Activated T-helper 2 cell treated with anti-CD3 and anti-CD28 coated beads, Interferon-gamma antibody, Interleukin-2, Interleukin-4, amounts not matched to agents 10 μg/mL and 5 μg/mL and 100 μg/mL, durations not matched to agents 14 hours and 24 hours and 36 hours (primary cell): ENCODE measurements at regions of chr11 and their contacts with region 1.

Region 1: DNA sequence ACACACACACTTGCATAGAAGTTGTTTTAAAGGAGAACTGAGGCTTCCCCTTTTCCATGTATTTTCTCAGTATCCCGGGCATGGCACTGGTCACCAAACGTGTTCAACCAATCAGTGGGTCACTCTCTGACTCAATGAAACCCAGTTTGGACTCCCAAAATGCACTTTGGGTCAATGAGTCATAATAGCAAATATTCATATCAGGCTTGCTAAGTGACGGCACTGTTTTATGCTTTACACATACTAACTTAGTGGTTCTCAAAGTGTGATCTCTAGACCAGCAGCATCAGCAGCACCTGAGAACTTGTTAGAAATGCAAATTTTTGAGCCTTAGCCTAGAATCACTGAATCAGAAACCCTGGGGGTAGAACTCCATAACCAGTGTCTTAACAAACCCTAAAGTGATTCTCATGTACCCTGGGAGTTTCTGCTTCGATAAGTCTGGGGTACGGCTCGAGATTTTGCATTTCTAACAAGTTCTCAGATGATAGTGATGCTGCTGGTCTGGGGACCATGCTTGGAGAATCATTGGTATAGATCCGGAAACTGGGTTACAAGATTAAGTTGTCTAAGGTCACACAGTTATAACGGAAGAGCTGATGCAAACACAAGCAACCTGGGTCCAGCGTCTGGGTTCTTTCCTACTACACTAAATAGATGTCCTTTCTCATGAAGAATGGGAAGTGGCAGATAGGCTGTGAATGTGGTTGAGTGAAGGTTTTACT is 35.6 kb downstream of the ETS1 start:
- DNase-seq: no peak
- H3K4me3 Mint-ChIP-seq: no peak overlapping the region
- H3K27ac Mint-ChIP-seq: peak overlapping the region; percentile 73
- H3K4me1 Mint-ChIP-seq: peaks cover 42% of the 10 kb centered on the region
- H3K27me3 Mint-ChIP-seq: no peaks in the 10 kb centered on the region

Region 2: DNA sequence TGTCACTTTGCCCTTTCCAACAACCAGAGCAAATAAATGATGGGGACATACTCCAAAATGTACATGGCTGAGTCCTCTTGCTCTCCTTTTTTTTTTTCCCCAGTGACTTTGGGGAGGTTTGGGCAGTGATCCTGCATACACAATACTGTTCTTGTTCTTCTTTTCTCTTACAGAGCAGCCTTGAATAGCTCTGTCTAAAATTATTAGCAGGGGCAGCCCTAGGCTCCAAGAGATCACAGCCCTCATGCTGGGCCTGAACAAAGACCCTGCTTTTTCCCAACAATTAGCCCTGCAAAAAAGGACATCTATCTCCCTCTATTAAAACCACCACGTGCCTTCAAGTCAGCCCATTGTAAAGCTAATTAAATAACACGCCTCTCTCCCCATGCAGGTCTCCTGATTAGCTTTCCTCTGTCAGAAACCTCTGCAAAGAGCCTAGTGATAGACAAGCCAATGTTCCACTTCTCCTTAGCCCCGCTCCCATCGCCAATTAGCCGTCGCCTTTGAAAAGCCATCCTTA is 19.1 kb before region 1 on chr11:
- intact Hi-C with region 1: no loop called
- DNase-seq: no peak
- H3K4me3 Mint-ChIP-seq: no peak overlapping the region
- H3K27ac Mint-ChIP-seq: no peak overlapping the region
- H3K4me1 Mint-ChIP-seq: peaks cover 28% of the 10 kb centered on the region
- H3K27me3 Mint-ChIP-seq: no peaks in the 10 kb centered on the region

Region 3: GRCh38 chr11:128599729-128600128 is 48.0 kb after region 1 on chr11:
- intact Hi-C with region 1: loop called (anchors 1 kb)
- DNase-seq: no peak
- H3K4me3 Mint-ChIP-seq: no peak overlapping the region
- H3K27ac Mint-ChIP-seq: peak overlapping the region; percentile 62
- H3K4me1 Mint-ChIP-seq: peaks cover 36% of the 10 kb centered on the region
- H3K27me3 Mint-ChIP-seq: peaks cover 2% of the 10 kb centered on the region